CD4-positive, alpha-beta T cell (primary cell): ENCODE measurements at regions of chr1 and their contacts with region 1.

Region 1: GRCh38 chr1:185317034-185317885 is at the start of gene IVNS1ABP:
- DNase-seq: peak; percentile 94 to 99 (median 96)
- ATAC-seq: peak; percentile 68
- H3K4me3 ChIP-seq: peak within 1 kb of the TSS; percentile 88
- H3K4me3 Mint-ChIP-seq: peak within 1 kb of the TSS; percentile 95
- H3K27ac ChIP-seq: peak within 1 kb of the TSS; percentile 98 to 100
- H3K27ac Mint-ChIP-seq: peak within 1 kb of the TSS; percentile 98
- H3K4me1 ChIP-seq: peaks cover 17% of the 10 kb centered on the region
- H3K4me1 Mint-ChIP-seq: peaks cover 54% of the 10 kb centered on the region
- H3K27me3 ChIP-seq: no peaks in the 10 kb centered on the region
- H3K27me3 Mint-ChIP-seq: no peaks in the 10 kb centered on the region
- CTCF ChIP-seq: peak; percentile 43
- total RNA-seq, gene IVNS1ABP: 234 to 254 TPM

Region 2: GRCh38 chr1:184754476-184755225 is 562.6 kb before region 1 on chr1 and contains the start of gene EDEM3:
- CTCF ChIA-PET with region 1: no interaction called
- POLR2A ChIA-PET with region 1: no interaction called
- intact Hi-C with region 1: loop called in 1 of 2 experiments (anchors 10 kb)
- DNase-seq: peak; percentile 93 to 100 (median 96)
- ATAC-seq: peak; percentile 91
- H3K4me3 ChIP-seq: peak within 1 kb of the TSS; percentile 96
- H3K4me3 Mint-ChIP-seq: peak within 1 kb of the TSS; percentile 92
- H3K27ac ChIP-seq: peak within 1 kb of the TSS; percentile 90 to 95
- H3K27ac Mint-ChIP-seq: peak within 1 kb of the TSS; percentile 87
- H3K4me1 ChIP-seq: peaks cover 8% of the 10 kb centered on the region
- H3K4me1 Mint-ChIP-seq: peaks cover 52% of the 10 kb centered on the region
- H3K27me3 ChIP-seq: no peaks in the 10 kb centered on the region
- H3K27me3 Mint-ChIP-seq: no peaks in the 10 kb centered on the region
- CTCF ChIP-seq: no peak
- total RNA-seq, gene EDEM3: 19.9 to 20.0 TPM

Region 3: DNA sequence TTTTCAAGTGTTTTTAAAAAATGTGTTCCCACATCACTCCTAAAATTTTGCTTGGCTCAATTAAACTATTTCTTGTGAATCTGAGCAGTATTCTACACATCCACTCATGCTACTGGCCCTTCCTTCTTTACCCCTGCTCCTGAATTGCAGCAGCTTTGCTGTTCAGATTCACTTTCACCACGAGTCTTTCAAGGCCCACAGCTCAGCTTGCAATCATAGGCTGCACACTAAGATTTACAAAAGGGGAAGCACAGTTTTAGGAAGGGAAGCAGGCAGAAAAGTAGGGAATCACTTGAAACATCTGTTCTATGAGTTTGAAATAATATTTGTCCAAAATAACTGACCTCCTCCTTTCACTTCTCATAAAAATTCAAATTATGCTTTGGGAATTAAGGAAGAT is 491.7 kb before region 1 on chr1:
- CTCF ChIA-PET with region 1: no interaction called
- POLR2A ChIA-PET with region 1: no interaction called
- intact Hi-C with region 1: no loop called
- DNase-seq: peak in 1 of 14 experiments; percentile 21
- ATAC-seq: no peak
- H3K4me3 ChIP-seq: no peak overlapping the region
- H3K4me3 Mint-ChIP-seq: no peak overlapping the region
- H3K27ac ChIP-seq: no peak overlapping the region
- H3K27ac Mint-ChIP-seq: no peak overlapping the region
- H3K4me1 ChIP-seq: no peaks in the 10 kb centered on the region
- H3K4me1 Mint-ChIP-seq: no peaks in the 10 kb centered on the region
- H3K27me3 ChIP-seq: no peaks in the 10 kb centered on the region
- H3K27me3 Mint-ChIP-seq: no peaks in the 10 kb centered on the region
- CTCF ChIP-seq: no peak

Region 4: DNA sequence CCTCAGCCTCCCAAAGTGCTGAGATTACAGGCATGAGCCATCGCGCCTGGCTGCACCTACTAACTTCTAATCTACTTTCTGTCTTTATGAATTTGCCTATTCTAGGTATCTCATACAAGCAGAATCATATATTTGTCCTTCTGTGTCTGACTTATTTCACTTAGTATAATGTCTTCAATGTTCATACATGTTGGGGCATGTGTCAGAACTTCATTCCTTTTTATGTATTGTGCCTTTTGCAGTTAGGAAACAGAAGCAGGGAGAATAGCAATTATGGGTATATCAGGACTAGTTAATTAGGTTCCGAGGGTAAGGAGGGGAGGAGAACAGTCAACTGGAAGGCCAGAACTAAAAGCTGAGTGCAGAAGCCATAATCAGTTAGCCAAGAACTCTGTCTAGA is 325.0 kb before region 1 on chr1:
- CTCF ChIA-PET with region 1: no interaction called
- POLR2A ChIA-PET with region 1: no interaction called
- intact Hi-C with region 1: no loop called
- DNase-seq: no peak
- ATAC-seq: no peak
- H3K4me3 ChIP-seq: no peak overlapping the region
- H3K4me3 Mint-ChIP-seq: no peak overlapping the region
- H3K27ac ChIP-seq: no peak overlapping the region
- H3K27ac Mint-ChIP-seq: no peak overlapping the region
- H3K4me1 ChIP-seq: no peaks in the 10 kb centered on the region
- H3K4me1 Mint-ChIP-seq: no peaks in the 10 kb centered on the region
- H3K27me3 ChIP-seq: no peaks in the 10 kb centered on the region
- H3K27me3 Mint-ChIP-seq: peaks cover 11% of the 10 kb centered on the region
- CTCF ChIP-seq: no peak

Region 5: DNA sequence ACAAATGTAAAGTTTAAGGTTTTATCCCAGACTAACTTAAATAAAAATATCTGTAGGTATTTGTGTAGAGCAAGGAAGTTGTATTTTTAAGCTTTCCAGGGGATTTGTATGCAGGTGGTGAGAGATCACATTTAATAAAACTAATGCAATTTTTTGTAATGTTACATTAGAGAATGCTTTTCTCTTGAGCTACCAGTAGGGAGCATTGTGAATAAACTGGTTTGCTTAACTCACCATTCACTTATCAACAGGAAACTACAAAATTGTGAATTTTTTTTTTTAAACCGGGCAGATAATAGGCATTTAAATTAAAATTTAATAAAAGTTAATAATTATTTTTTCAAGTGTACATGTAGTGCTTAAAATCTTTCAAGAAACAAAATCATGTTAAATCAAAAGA is 78.8 kb before region 1 on chr1:
- CTCF ChIA-PET with region 1: interaction called, 13 read pairs
- POLR2A ChIA-PET with region 1: interaction called, 69 read pairs
- intact Hi-C with region 1: loop called (anchors 5 kb)
- DNase-seq: peak in 3 of 14 experiments; percentile 48 to 59 (median 52)
- ATAC-seq: peak; percentile 79
- H3K4me3 ChIP-seq: no peak overlapping the region
- H3K4me3 Mint-ChIP-seq: peak overlapping the region; percentile 7
- H3K27ac ChIP-seq: no peak overlapping the region
- H3K27ac Mint-ChIP-seq: no peak overlapping the region
- H3K4me1 ChIP-seq: no peaks in the 10 kb centered on the region
- H3K4me1 Mint-ChIP-seq: peaks cover 30% of the 10 kb centered on the region
- H3K27me3 ChIP-seq: no peaks in the 10 kb centered on the region
- H3K27me3 Mint-ChIP-seq: no peaks in the 10 kb centered on the region
- CTCF ChIP-seq: peak; percentile 84

Region 6: GRCh38 chr1:185291652-185292051 is 25.6 kb before region 1 on chr1:
- CTCF ChIA-PET with region 1: no interaction called
- POLR2A ChIA-PET with region 1: interaction called, 18 read pairs
- intact Hi-C with region 1: no loop called
- DNase-seq: no peak
- ATAC-seq: no peak
- H3K4me3 ChIP-seq: no peak overlapping the region
- H3K4me3 Mint-ChIP-seq: no peak overlapping the region
- H3K27ac ChIP-seq: no peak overlapping the region
- H3K27ac Mint-ChIP-seq: no peak overlapping the region
- H3K4me1 ChIP-seq: no peaks in the 10 kb centered on the region
- H3K4me1 Mint-ChIP-seq: peaks cover 40% of the 10 kb centered on the region
- H3K27me3 ChIP-seq: no peaks in the 10 kb centered on the region
- H3K27me3 Mint-ChIP-seq: no peaks in the 10 kb centered on the region
- CTCF ChIP-seq: no peak

Region 7: DNA sequence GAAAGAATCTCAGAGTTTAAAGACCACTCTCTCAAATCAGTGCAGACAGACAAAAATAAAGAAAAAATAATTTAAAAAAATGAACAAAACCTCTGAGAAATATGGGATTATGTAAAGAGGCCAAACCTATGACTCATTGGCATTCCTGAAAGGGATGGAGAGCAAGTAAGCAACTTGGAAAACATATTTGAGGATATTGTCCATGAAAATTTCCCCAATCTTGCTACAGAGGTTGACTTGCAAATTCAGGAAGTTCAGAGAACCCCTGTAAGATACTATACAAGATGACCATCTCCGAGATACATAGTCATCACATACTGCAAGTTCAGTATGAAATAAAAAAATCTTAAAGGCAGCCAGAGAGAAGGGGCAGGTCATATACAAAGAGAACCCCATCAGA is 43.5 kb after region 1 on chr1:
- CTCF ChIA-PET with region 1: no interaction called
- POLR2A ChIA-PET with region 1: no interaction called
- intact Hi-C with region 1: no loop called
- DNase-seq: no peak
- ATAC-seq: no peak
- H3K4me3 ChIP-seq: no peak overlapping the region
- H3K4me3 Mint-ChIP-seq: no peak overlapping the region
- H3K27ac ChIP-seq: no peak overlapping the region
- H3K27ac Mint-ChIP-seq: no peak overlapping the region
- H3K4me1 ChIP-seq: no peaks in the 10 kb centered on the region
- H3K4me1 Mint-ChIP-seq: no peaks in the 10 kb centered on the region
- H3K27me3 ChIP-seq: no peaks in the 10 kb centered on the region
- H3K27me3 Mint-ChIP-seq: no peaks in the 10 kb centered on the region
- CTCF ChIP-seq: no peak

Region 8: GRCh38 chr1:185439727-185440415 is 122.6 kb after region 1 on chr1:
- CTCF ChIA-PET with region 1: no interaction called
- POLR2A ChIA-PET with region 1: interaction called, 10 read pairs
- intact Hi-C with region 1: no loop called
- DNase-seq: peak in 4 of 14 experiments; percentile 3 to 81 (median 50)
- ATAC-seq: peak; percentile 65
- H3K4me3 ChIP-seq: no peak overlapping the region
- H3K4me3 Mint-ChIP-seq: no peak overlapping the region
- H3K27ac ChIP-seq: peak overlapping the region in 1 of 2 donors; percentile 72
- H3K27ac Mint-ChIP-seq: no peak overlapping the region
- H3K4me1 ChIP-seq: no peaks in the 10 kb centered on the region
- H3K4me1 Mint-ChIP-seq: no peaks in the 10 kb centered on the region
- H3K27me3 ChIP-seq: no peaks in the 10 kb centered on the region
- H3K27me3 Mint-ChIP-seq: no peaks in the 10 kb centered on the region
- CTCF ChIP-seq: no peak

Region 9: GRCh38 chr1:185595835-185596667 is 278.8 kb after region 1 on chr1:
- CTCF ChIA-PET with region 1: interaction called, 17 read pairs
- POLR2A ChIA-PET with region 1: interaction called, 32 read pairs
- intact Hi-C with region 1: loop called in 1 of 2 experiments (anchors 1 kb)
- DNase-seq: peak; percentile 33 to 77 (median 44)
- ATAC-seq: peak; percentile 80
- H3K4me3 ChIP-seq: no peak overlapping the region
- H3K4me3 Mint-ChIP-seq: no peak overlapping the region
- H3K27ac ChIP-seq: no peak overlapping the region
- H3K27ac Mint-ChIP-seq: no peak overlapping the region
- H3K4me1 ChIP-seq: peaks cover 7% of the 10 kb centered on the region
- H3K4me1 Mint-ChIP-seq: peaks cover 18% of the 10 kb centered on the region
- H3K27me3 ChIP-seq: no peaks in the 10 kb centered on the region
- H3K27me3 Mint-ChIP-seq: no peaks in the 10 kb centered on the region
- CTCF ChIP-seq: peak; percentile 48

Region 10: GRCh38 chr1:185681034-185681633 is 363.9 kb after region 1 on chr1:
- CTCF ChIA-PET with region 1: interaction called, 6 read pairs
- POLR2A ChIA-PET with region 1: interaction called, 40 read pairs
- intact Hi-C with region 1: loop called in 1 of 2 experiments (anchors 5 kb)
- DNase-seq: peak in 5 of 14 experiments; percentile 6 to 74 (median 58)
- ATAC-seq: peak; percentile 62
- H3K4me3 ChIP-seq: no peak overlapping the region
- H3K4me3 Mint-ChIP-seq: no peak overlapping the region
- H3K27ac ChIP-seq: no peak overlapping the region
- H3K27ac Mint-ChIP-seq: no peak overlapping the region
- H3K4me1 ChIP-seq: peaks cover 9% of the 10 kb centered on the region
- H3K4me1 Mint-ChIP-seq: peaks cover 33% of the 10 kb centered on the region
- H3K27me3 ChIP-seq: no peaks in the 10 kb centered on the region
- H3K27me3 Mint-ChIP-seq: no peaks in the 10 kb centered on the region
- CTCF ChIP-seq: peak; percentile 73